ENCODE measurements at regions of chr1 and their contacts with region 1.

Region 1: DNA sequence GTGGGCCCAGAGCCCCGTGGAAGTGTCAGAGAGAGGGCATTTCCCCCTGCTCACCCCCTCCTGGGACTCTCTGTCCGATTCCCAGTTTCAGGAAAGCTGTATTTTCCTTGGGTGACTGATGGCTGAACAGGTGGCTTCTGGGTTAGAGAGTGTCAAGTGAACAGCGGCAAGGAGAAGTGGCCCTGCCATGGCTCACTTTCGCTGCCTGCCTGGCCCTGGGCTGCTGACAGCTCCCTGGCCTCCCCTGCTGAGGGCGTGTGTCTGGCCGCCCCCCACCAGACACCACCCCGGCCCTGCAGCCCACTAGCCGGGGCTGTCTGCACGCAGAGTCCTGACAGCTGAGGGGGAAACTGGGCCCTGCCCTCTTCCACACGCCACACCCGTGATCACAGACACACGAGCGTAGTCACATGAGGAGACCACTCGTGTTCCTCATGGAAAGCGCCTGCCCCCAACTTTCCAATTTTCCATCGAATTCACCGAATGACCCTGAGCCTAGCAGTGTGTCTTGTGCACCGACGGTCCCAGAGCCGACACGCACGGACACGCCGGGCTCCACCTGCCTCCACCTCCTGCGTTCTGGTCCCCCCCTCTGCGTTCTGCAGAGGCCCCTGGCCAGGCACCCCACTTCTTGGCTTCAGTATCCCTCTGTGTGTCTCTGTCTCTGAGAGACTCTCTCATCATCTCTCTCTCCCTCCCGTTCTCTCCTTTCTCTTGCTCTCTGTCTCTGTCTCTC is 60.6 kb upstream of the CASZ1 start:
- DNase-seq: peak; percentile 42
- ATAC-seq: no peak

Region 2: DNA sequence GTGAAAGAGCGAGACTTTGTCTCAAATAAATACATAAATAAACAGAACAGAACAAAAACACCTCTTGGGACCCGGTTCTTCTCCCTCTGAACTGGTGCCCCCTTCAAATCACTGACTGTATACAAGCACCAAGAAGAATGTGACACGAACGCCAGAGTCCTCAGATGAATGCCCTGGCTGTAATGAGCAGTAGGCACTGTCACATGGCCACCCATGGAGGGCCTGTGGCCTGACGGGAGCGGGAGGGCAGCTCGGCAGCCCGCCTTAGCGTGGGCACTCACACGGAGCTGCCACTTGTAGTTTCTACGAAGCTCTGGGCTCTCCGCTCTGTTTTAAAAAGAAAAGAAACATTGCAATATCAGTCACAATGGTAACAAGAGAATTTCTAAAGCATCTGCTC is 236.3 kb before region 1 on chr1:
- intact Hi-C with region 1: no loop called
- DNase-seq: no peak
- ATAC-seq: no peak

Region 3: DNA sequence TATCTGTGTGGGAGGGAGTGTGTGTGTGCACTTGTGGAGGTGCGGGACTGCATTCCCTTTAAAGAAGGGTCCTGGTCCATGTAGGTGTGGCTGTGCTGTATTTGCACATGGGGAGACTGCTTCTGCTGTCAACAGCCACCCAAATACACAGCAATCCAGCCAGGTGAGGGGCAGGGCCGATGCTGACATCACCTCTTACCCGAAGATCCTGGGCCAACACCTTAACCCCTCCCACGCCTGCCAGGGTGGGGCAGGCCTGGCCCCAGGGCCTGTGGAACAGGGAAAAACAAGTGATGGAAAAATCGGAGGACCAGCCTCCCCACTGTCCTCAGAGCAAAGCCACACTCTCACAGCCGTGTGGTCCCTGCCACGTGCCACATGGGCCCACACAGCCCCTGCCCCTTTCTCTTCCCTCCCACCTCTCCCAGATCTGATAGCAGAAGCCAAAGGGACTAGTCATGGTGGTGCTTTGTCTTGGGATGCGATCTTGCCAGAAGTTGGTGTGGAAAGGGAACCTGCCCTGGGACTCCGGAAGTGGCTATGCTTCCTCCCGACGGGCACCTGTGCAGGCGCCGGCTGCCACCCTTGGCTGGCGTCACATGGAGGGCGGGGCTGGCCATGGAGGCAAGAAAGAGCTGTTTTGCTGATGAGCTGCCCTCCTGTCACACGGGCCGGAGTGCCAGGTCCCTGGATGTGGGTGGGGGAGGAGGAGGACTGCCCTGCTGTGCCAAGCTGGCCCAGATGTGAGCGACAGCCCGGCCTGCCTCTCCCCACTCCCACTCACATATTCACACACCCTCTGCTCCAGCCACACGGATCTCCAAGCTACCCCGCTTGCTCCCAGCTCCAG is 52.8 kb before region 1 on chr1:
- intact Hi-C with region 1: no loop called
- DNase-seq: no peak
- ATAC-seq: peak; percentile 16

Region 4: GRCh38 chr1:10823000-10823401 is 34.0 kb before region 1 on chr1:
- intact Hi-C with region 1: loop called (anchors 2 kb)
- DNase-seq: no peak
- ATAC-seq: peak; percentile 3